ENCODE measurements at regions of chr4 and their contacts with region 1.

Region 1: DNA sequence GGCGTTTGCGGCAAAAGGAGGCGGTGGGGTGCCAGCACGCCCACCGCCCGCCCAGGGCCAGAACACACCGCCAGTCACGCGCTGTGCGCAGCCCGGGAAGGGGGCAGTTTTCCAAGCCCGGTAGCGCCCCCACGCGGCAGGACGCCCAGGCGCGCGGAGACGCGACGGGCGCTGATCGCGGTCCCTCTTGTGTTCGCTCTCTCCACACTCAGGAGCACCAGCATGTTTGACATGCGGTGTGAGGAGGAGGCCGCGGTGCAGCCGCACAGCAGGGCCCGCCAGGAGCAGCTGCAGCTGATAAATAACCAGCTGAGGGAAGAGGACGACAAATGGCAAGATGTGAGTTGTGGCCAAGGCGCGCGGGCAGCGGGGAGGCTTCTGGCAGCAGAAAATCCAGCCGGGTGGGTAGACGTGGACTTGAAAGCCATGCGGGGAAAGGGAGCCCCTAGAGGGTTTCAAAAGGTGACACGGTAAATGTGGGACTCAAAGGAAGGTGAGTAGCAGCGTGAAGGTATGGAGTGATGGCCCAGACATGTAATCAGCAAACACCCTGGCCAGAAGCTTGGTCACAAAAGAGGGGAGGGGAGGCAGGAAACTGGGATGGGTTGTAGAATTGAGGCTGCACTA is 104.1 kb downstream of the PHOX2B start:
- DNase-seq: peak; percentile 52
- H3K4me3 ChIP-seq: no peak overlapping the region
- H3K27ac ChIP-seq: no peak overlapping the region
- H3K4me1 ChIP-seq: no peaks in the 10 kb centered on the region
- H3K27me3 ChIP-seq: peaks cover 15 to 28% of the 10 kb centered on the region in 2 experiments
- CTCF ChIP-seq: peak; percentile 88 to 94
- POLR2A ChIP-seq: no peak

Region 2: GRCh38 chr4:41257257-41257901 is 387.0 kb before region 1 on chr4:
- CTCF ChIA-PET with region 1: interaction called, 16 read pairs
- POLR2A ChIA-PET with region 1: no interaction called
- dilution Hi-C with region 1: no loop called
- intact Hi-C with region 1: no loop called
- DNase-seq: peak; percentile 36
- H3K4me3 ChIP-seq: peak overlapping the region; percentile 35 to 54 (median 48)
- H3K27ac ChIP-seq: peak overlapping the region; percentile 0
- H3K4me1 ChIP-seq: peaks cover 12% of the 10 kb centered on the region
- H3K27me3 ChIP-seq: peaks cover 14 to 15% of the 10 kb centered on the region in 2 experiments
- CTCF ChIP-seq: no peak
- POLR2A ChIP-seq: no peak

Region 3: DNA sequence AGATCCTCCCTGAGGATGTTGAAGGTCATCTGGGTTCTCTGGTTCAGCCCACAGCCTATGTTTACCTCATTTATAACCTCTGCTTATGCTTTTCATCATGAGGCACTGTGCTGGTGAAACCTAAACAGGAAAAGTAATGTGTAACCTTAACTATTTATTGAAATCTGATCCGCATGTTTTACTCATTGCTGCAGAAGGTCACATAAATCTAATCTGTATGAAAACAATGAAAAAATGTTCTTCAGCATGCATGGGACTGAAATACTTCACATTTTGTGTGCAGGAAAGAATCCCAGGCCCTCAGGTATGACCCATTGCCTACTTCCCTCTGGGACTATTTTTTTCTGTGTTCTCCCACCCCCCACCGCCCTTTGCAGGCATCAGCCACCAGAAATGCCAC is 357.4 kb before region 1 on chr4:
- CTCF ChIA-PET with region 1: interaction called, 212 read pairs
- POLR2A ChIA-PET with region 1: no interaction called
- dilution Hi-C with region 1: no loop called
- intact Hi-C with region 1: no loop called
- DNase-seq: peak; percentile 62
- H3K4me3 ChIP-seq: no peak overlapping the region
- H3K27ac ChIP-seq: no peak overlapping the region
- H3K4me1 ChIP-seq: peaks cover 2% of the 10 kb centered on the region
- H3K27me3 ChIP-seq: peaks cover 0 to 4% of the 10 kb centered on the region in 2 experiments
- CTCF ChIP-seq: no peak
- POLR2A ChIP-seq: no peak

Region 4: DNA sequence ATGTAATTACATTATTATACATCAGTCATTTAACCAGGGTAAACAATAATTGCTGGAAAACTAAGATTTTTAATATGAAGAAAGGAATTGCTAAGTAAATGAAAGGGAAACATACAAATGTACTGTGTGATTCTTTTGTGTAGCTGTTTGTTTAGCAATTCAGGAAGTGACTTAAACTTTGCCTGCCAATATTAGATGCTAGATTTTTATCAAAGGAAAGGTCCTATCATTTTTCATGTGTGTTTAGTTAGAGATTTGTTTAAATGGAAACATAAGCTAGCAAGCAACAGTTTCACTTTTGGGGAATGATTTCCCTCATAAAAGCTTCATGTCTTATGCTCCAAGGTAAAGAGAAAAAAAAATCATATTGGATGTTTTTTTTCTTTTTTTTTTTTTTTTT is 201.6 kb before region 1 on chr4:
- CTCF ChIA-PET with region 1: interaction called, 10 read pairs
- POLR2A ChIA-PET with region 1: no interaction called
- dilution Hi-C with region 1: no loop called
- intact Hi-C with region 1: no loop called
- DNase-seq: peak; percentile 73
- H3K4me3 ChIP-seq: no peak overlapping the region
- H3K27ac ChIP-seq: no peak overlapping the region
- H3K4me1 ChIP-seq: peaks cover 8% of the 10 kb centered on the region
- H3K27me3 ChIP-seq: peaks cover 13 to 34% of the 10 kb centered on the region in 2 experiments
- CTCF ChIP-seq: no peak
- POLR2A ChIP-seq: no peak

Region 5: GRCh38 chr4:41538017-41538733 is 106.2 kb before region 1 on chr4 and contains the start of gene LIMCH1:
- CTCF ChIA-PET with region 1: interaction called, 3 read pairs
- POLR2A ChIA-PET with region 1: no interaction called
- dilution Hi-C with region 1: no loop called
- intact Hi-C with region 1: loop called (anchors 2 kb)
- DNase-seq: no peak
- H3K4me3 ChIP-seq: no peak within 1 kb of the TSS
- H3K27ac ChIP-seq: no peak within 1 kb of the TSS
- H3K4me1 ChIP-seq: peaks cover 45% of the 10 kb centered on the region
- H3K27me3 ChIP-seq: peaks cover 4 to 11% of the 10 kb centered on the region in 2 experiments
- CTCF ChIP-seq: no peak
- POLR2A ChIP-seq: no peak
- total RNA-seq, gene LIMCH1: 18.6 and 32.8 TPM in 2 replicates

Region 6: GRCh38 chr4:41661442-41662076 is 17.2 kb after region 1 on chr4:
- CTCF ChIA-PET with region 1: interaction called, 28 read pairs
- POLR2A ChIA-PET with region 1: no interaction called
- dilution Hi-C with region 1: no loop called
- intact Hi-C with region 1: no loop called
- DNase-seq: peak; percentile 69
- H3K4me3 ChIP-seq: no peak overlapping the region
- H3K27ac ChIP-seq: no peak overlapping the region
- H3K4me1 ChIP-seq: no peaks in the 10 kb centered on the region
- H3K27me3 ChIP-seq: peaks cover 2 to 12% of the 10 kb centered on the region in 2 experiments
- CTCF ChIP-seq: peak; percentile 82 to 87
- POLR2A ChIP-seq: no peak

Region 7: DNA sequence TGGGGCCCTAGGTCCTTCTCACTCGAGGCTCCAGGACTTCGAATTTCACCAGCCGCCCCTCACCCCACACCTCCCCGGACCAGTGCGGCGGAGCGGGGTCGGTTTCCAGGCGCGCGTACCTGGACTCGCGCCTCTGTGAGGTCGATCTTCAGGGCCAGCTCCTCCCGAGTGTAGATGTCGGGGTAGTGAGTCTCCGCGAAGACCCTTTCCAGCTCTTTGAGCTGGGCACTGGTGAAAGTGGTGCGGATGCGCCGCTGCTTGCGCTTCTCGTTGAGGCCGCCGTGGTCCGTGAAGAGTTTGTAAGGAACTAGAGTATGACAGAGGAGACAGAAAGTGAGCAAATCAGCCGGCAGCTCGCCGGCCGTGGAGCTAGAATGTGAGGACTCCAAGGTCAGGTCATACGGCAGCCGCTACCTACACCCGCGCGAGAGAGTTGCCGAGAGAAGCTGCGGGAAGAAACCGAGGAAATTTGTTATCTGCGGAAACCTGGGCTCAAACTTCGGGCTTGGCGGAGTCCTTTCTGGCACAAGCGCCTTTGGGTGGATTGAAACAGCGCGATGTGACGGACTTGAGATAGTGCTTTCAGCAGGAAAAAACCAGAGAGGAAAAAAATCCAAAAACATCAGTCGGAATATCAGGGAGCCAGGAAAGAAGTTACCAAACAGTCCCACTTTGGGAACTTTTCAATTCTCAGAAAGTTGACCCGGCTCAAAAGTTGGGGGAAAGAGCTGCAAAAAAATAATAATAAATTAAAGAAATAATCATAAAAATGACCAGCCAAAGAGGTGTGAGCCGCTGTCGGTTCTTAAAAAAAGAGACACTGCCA is 103.0 kb after region 1 on chr4:
- CTCF ChIA-PET with region 1: no interaction called
- POLR2A ChIA-PET with region 1: no interaction called
- dilution Hi-C with region 1: no loop called
- intact Hi-C with region 1: no loop called
- DNase-seq: no peak
- H3K4me3 ChIP-seq: no peak overlapping the region
- H3K27ac ChIP-seq: no peak overlapping the region
- H3K4me1 ChIP-seq: no peaks in the 10 kb centered on the region
- H3K27me3 ChIP-seq: peaks cover 91 to 96% of the 10 kb centered on the region in 2 experiments
- CTCF ChIP-seq: no peak
- POLR2A ChIP-seq: no peak